Right ventricle myocardium superior (tissue), 1 donor: ENCODE measurements at regions of chr4 and their contacts with region 1.

Region 1: GRCh38 chr4:86497980-86498862 is 95.9 kb upstream of the PTPN13 start:
- DNase-seq: no peak
- ATAC-seq: peak; percentile 90

Region 2: GRCh38 chr4:86615501-86615900 is 117.3 kb after region 1 on chr4:
- intact Hi-C with region 1: no loop called
- DNase-seq: no peak
- ATAC-seq: no peak

Region 3: GRCh38 chr4:86895692-86896488 is 397.7 kb after region 1 on chr4:
- intact Hi-C with region 1: loop called (anchors 5 kb)
- DNase-seq: no peak
- ATAC-seq: peak; percentile 52

Region 4: GRCh38 chr4:87188048-87188447 is 689.8 kb after region 1 on chr4:
- intact Hi-C with region 1: no loop called
- DNase-seq: no peak
- ATAC-seq: no peak